ENCODE measurements at regions of chr6 and their contacts with region 1.

Region 1: GRCh38 chr6:43174263-43175112 is 3.4 kb downstream of the SRF start:
- DNase-seq: peak; percentile 74 to 96 (median 86)
- ATAC-seq: peak; percentile 68 to 71 (median 68)
- H3K4me3 ChIP-seq: peak overlapping the region; percentile 51 to 52
- H3K4me3 Mint-ChIP-seq: peak overlapping the region; percentile 88 to 93 (median 92)
- H3K27ac ChIP-seq: peak overlapping the region; percentile 80
- H3K27ac Mint-ChIP-seq: peak overlapping the region; percentile 91 to 95
- H3K4me1 ChIP-seq: peaks cover 26 to 51% of the 10 kb centered on the region in 2 experiments
- H3K4me1 Mint-ChIP-seq: peaks cover 44 to 49% (median 45%) of the 10 kb centered on the region in 3 donors
- H3K27me3 ChIP-seq: peaks cover 0 to 6% of the 10 kb centered on the region in 2 experiments
- H3K27me3 Mint-ChIP-seq: no peaks in the 10 kb centered on the region

Region 2: DNA sequence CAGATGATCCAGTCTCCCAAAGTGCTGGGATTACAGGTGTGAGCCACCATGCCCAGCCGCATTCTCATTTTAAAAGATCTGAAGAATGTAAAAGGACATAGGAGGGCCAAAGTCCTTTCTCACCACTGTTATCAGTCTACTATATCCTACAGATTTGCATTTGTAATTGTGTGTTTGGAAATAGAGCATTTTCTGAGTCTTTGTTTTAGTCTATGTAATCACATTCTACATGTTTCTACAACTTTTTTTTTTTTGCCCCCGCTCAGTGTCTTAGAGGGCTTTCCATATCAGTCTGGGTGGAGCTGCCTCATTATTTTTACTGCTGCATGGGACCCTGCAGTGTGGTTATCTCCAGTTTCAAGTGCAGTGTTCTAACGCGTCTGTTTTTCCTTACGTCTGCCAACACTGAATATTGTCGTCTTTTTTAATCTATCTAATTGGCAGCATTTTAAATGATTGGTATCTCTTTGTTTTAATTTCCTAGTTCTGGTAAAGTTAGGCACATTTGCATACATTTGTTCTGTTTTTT is 15.4 kb after region 1 on chr6:
- CTCF ChIA-PET with region 1: interaction called, 3 to 10 read pairs
- POLR2A ChIA-PET with region 1: interaction called in 1 of 2 experiments, 3 read pairs
- DNase-seq: no peak
- ATAC-seq: no peak
- H3K4me3 ChIP-seq: no peak overlapping the region
- H3K4me3 Mint-ChIP-seq: no peak overlapping the region
- H3K27ac ChIP-seq: no peak overlapping the region
- H3K27ac Mint-ChIP-seq: no peak overlapping the region
- H3K4me1 ChIP-seq: peaks cover 14 to 19% of the 10 kb centered on the region in 2 experiments
- H3K4me1 Mint-ChIP-seq: peaks cover 30 to 40% (median 38%) of the 10 kb centered on the region in 3 donors
- H3K27me3 ChIP-seq: no peaks in the 10 kb centered on the region
- H3K27me3 Mint-ChIP-seq: no peaks in the 10 kb centered on the region

Region 3: GRCh38 chr6:43334466-43335095 is 160.1 kb after region 1 on chr6:
- CTCF ChIA-PET with region 1: no interaction called
- POLR2A ChIA-PET with region 1: no interaction called
- DNase-seq: peak in 1 of 35 experiments; percentile 42
- ATAC-seq: no peak
- H3K4me3 ChIP-seq: no peak overlapping the region
- H3K4me3 Mint-ChIP-seq: no peak overlapping the region
- H3K27ac ChIP-seq: no peak overlapping the region
- H3K27ac Mint-ChIP-seq: peak overlapping the region in 1 of 2 donors; percentile 67
- H3K4me1 ChIP-seq: peaks cover 4 to 5% of the 10 kb centered on the region in 2 experiments
- H3K4me1 Mint-ChIP-seq: peaks cover 18 to 28% (median 24%) of the 10 kb centered on the region in 3 donors
- H3K27me3 ChIP-seq: no peaks in the 10 kb centered on the region
- H3K27me3 Mint-ChIP-seq: no peaks in the 10 kb centered on the region

Region 4: DNA sequence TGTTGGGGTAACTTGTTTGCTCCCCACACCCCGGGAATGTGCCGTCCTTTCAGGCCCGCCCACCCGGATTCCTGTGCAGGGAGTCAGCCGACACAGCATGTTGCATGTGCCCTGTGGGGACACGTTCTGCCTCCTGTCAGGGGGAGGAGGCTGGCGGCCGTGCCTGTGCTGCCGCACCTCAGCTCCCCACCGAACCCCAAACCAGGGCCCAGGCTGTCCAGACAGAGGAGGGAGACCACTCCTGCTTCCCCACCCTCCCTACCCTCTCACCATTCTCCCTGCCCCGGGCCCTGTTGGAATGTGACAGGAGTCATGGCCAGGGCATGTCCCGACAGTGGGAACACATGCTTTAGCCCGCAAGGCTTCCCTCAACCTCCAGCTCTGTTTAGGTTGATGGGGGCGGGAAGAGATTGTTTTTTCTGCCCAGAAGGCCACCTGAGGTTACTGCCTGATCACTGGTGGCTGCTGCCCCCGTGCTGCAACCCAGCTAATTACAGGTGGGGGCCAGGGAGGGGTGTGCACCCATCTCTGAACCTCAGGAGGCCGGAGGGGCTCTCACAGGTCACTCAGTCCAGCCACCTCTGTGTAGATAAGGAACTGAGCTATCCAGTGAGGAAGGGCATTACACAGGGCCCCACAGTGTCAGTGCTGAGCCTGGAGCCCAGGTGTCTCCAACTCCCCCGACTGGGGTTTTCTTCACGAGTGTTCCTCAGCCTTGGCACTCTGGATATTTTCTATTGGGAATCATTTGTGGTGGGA is 322.1 kb after region 1 on chr6:
- CTCF ChIA-PET with region 1: no interaction called
- POLR2A ChIA-PET with region 1: no interaction called
- DNase-seq: peak in 3 of 35 experiments; percentile 20 to 43 (median 26)
- ATAC-seq: peak in 1 of 4 experiments; percentile 27
- H3K4me3 ChIP-seq: no peak overlapping the region
- H3K4me3 Mint-ChIP-seq: no peak overlapping the region
- H3K27ac ChIP-seq: no peak overlapping the region
- H3K27ac Mint-ChIP-seq: peak overlapping the region in 1 of 2 donors; percentile 16
- H3K4me1 ChIP-seq: peaks cover 4 to 36% of the 10 kb centered on the region in 2 experiments
- H3K4me1 Mint-ChIP-seq: peaks cover 32 to 37% (median 33%) of the 10 kb centered on the region in 3 donors
- H3K27me3 ChIP-seq: no peaks in the 10 kb centered on the region
- H3K27me3 Mint-ChIP-seq: no peaks in the 10 kb centered on the region